ENCODE measurements at regions of chr1 and their contacts with region 1.

Region 1: DNA sequence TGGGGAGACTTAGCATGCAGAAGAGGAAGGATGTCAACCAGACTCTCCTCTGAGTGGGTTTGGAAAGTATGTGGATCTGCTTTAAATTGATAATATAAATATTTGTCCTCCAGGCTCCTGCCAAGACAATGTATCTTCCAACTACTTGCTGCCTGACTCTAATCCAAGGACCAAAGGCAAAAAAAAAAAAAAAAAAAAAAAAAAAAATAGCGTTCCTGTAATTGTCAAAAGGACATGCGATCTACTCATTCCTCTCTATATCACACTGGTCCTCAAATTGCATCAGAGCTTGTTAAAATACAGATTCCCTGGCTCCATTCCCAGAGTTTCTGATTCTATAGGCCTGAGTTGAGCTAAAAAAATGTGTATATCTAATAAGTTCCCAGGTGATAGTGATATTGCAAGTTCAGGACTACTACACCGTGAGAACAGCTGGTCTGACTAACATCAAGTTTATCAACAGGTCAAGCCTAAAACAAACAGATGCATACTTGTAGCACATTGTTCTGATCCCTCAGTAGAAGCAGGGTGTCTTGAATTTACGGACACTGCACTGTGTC is 141.3 kb downstream of the TNR start:
- DNase-seq: no peak
- ATAC-seq: no peak
- H3K4me3 ChIP-seq: no peak overlapping the region
- H3K27ac ChIP-seq: no peak overlapping the region
- H3K4me1 ChIP-seq: no peaks in the 10 kb centered on the region
- H3K27me3 ChIP-seq: peaks cover 4% of the 10 kb centered on the region; the same call in 1 of the 2 replicates
- CTCF ChIP-seq: no peak

Region 2: DNA sequence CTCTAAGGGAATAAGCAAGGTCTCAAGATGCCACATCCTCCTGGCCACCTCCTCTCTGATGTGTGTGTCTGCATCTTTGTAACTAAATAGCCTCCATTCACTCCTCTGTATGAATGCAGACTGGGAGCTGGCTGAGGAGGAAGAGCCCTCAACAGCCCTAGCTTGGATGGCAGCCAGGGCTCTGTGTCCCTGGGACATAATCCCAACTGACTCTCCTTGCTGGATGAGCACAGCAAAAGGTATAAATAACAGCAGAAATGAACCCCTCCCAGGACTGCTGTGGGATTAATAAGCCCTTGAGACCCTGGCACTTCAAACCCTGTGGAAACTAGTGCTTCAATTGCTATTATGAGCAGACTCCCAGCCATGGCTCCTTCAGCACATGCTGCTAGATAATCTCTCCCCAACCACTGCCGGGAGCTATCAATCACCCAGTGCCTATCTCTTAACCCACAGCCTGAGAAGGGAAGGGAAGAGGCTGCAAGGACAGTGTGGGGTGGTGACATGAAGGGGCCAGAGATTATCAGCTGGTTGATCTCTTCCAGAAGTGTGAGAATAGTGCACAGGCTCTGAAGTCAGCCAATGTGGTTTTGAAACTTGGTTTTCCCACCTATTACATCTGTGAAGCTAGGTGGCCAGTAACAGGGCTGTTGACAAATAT is 10.9 kb before region 1 on chr1:
- CTCF ChIA-PET with region 1: no interaction called
- POLR2A ChIA-PET with region 1: no interaction called
- in situ Hi-C with region 1: no loop called
- intact Hi-C with region 1: no loop called
- DNase-seq: no peak
- ATAC-seq: no peak
- H3K4me3 ChIP-seq: no peak overlapping the region
- H3K27ac ChIP-seq: no peak overlapping the region
- H3K4me1 ChIP-seq: no peaks in the 10 kb centered on the region
- H3K27me3 ChIP-seq: no peaks in the 10 kb centered on the region; the same call in 1 of the 2 replicates
- CTCF ChIP-seq: no peak

Region 3: GRCh38 chr1:175870217-175870616 is 268.1 kb after region 1 on chr1:
- CTCF ChIA-PET with region 1: interaction called, 13 read pairs
- POLR2A ChIA-PET with region 1: no interaction called
- in situ Hi-C with region 1: no loop called
- intact Hi-C with region 1: no loop called
- DNase-seq: no peak
- ATAC-seq: no peak
- H3K4me3 ChIP-seq: no peak overlapping the region
- H3K27ac ChIP-seq: no peak overlapping the region
- H3K4me1 ChIP-seq: no peaks in the 10 kb centered on the region
- H3K27me3 ChIP-seq: no peaks in the 10 kb centered on the region
- CTCF ChIP-seq: no peak

Measured in Panc1 (cell line).